CD4-positive, alpha-beta T cell (primary cell): ENCODE measurements at regions of chr15 and their contacts with region 1.

Region 1: GRCh38 chr15:101294731-101295606 is at the start of gene SNRPA1:
- DNase-seq: peak; percentile 94 to 99 (median 97)
- ATAC-seq: peak; percentile 80
- H3K4me3 ChIP-seq: peak within 1 kb of the TSS; percentile 90
- H3K4me3 Mint-ChIP-seq: peak within 1 kb of the TSS; percentile 100
- H3K27ac ChIP-seq: peak within 1 kb of the TSS; percentile 95 to 98
- H3K27ac Mint-ChIP-seq: peak within 1 kb of the TSS; percentile 98
- H3K4me1 ChIP-seq: peaks cover 35% of the 10 kb centered on the region
- H3K4me1 Mint-ChIP-seq: peaks cover 60% of the 10 kb centered on the region
- H3K27me3 ChIP-seq: no peaks in the 10 kb centered on the region
- H3K27me3 Mint-ChIP-seq: no peaks in the 10 kb centered on the region
- CTCF ChIP-seq: no peak
- total RNA-seq, gene SNRPA1: 214 to 222 TPM

Region 2: DNA sequence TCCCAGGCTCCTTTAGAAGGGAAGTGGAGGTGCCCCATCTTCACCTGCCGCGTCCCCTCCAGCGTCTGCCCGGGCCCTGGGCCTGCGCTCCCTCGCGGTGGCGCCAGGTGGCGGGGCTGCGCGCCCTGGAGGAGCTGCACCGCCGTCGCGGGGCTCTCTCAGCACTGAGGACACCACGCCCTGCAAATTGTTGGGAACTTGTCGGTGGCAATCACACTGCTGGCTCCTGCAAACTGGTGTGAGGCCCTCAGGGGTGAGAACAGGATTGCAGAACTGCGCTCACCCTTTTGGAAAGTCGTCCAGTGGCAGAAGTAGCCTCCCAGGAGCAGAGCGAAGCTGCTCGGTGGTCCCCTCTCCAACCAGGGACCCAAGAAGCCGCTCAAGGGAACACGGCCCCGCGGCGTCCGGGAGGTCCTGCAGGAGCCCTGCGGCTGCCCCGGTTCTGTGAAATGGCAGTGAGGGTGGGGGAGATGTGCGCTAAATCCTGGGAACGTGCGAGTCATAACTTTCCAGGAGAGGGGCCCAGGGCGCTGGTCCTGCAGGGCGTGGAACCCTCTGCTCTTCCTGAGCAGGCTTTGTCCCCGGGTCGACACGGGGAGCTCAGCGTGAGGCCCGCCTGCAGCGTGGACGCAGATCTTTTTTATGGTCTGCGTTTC is 376.8 kb before region 1 on chr15:
- CTCF ChIA-PET with region 1: no interaction called
- POLR2A ChIA-PET with region 1: no interaction called
- intact Hi-C with region 1: no loop called
- DNase-seq: peak; percentile 17 to 75 (median 54)
- ATAC-seq: peak; percentile 86
- H3K4me3 ChIP-seq: peak overlapping the region; percentile 53
- H3K4me3 Mint-ChIP-seq: peak overlapping the region; percentile 86
- H3K27ac ChIP-seq: no peak overlapping the region
- H3K27ac Mint-ChIP-seq: no peak overlapping the region
- H3K4me1 ChIP-seq: peaks cover 18% of the 10 kb centered on the region
- H3K4me1 Mint-ChIP-seq: peaks cover 5% of the 10 kb centered on the region
- H3K27me3 ChIP-seq: peaks cover 37 to 48% of the 10 kb centered on the region in 2 experiments
- H3K27me3 Mint-ChIP-seq: peaks cover 81% of the 10 kb centered on the region
- CTCF ChIP-seq: peak; percentile 65

Region 3: GRCh38 chr15:101000271-101000681 is 294.7 kb before region 1 on chr15:
- CTCF ChIA-PET with region 1: no interaction called
- POLR2A ChIA-PET with region 1: no interaction called
- intact Hi-C with region 1: no loop called
- DNase-seq: no peak
- ATAC-seq: no peak
- H3K4me3 ChIP-seq: no peak overlapping the region
- H3K4me3 Mint-ChIP-seq: no peak overlapping the region
- H3K27ac ChIP-seq: no peak overlapping the region
- H3K27ac Mint-ChIP-seq: no peak overlapping the region
- H3K4me1 ChIP-seq: no peaks in the 10 kb centered on the region
- H3K4me1 Mint-ChIP-seq: no peaks in the 10 kb centered on the region
- H3K27me3 ChIP-seq: peaks cover 4 to 9% of the 10 kb centered on the region in 2 experiments
- H3K27me3 Mint-ChIP-seq: peaks cover 24% of the 10 kb centered on the region
- CTCF ChIP-seq: no peak

Region 4: GRCh38 chr15:101277038-101277882 is 17.7 kb before region 1 on chr15 and contains the start of gene SELENOS:
- CTCF ChIA-PET with region 1: no interaction called
- POLR2A ChIA-PET with region 1: interaction called, 10 read pairs
- intact Hi-C with region 1: loop called (anchors 1 to 2 kb)
- DNase-seq: peak; percentile 68 to 95 (median 84)
- ATAC-seq: peak; percentile 96
- H3K4me3 ChIP-seq: peak within 1 kb of the TSS; percentile 92
- H3K4me3 Mint-ChIP-seq: peak within 1 kb of the TSS; percentile 97
- H3K27ac ChIP-seq: peak within 1 kb of the TSS; percentile 56 to 58
- H3K27ac Mint-ChIP-seq: peak within 1 kb of the TSS; percentile 95
- H3K4me1 ChIP-seq: peaks cover 23% of the 10 kb centered on the region
- H3K4me1 Mint-ChIP-seq: peaks cover 24% of the 10 kb centered on the region
- H3K27me3 ChIP-seq: no peaks in the 10 kb centered on the region
- H3K27me3 Mint-ChIP-seq: no peaks in the 10 kb centered on the region
- CTCF ChIP-seq: no peak
- total RNA-seq, gene SELENOS: 41.7 to 48.5 TPM

Region 5: GRCh38 chr15:101333401-101333800 is 38.4 kb after region 1 on chr15:
- CTCF ChIA-PET with region 1: no interaction called
- POLR2A ChIA-PET with region 1: interaction called, 8 read pairs
- intact Hi-C with region 1: loop called in 1 of 2 experiments (anchors 5 kb)
- DNase-seq: peak in 1 of 14 experiments; percentile 11
- ATAC-seq: no peak
- H3K4me3 ChIP-seq: no peak overlapping the region
- H3K4me3 Mint-ChIP-seq: no peak overlapping the region
- H3K27ac ChIP-seq: peak overlapping the region; percentile 76 to 84
- H3K27ac Mint-ChIP-seq: peak overlapping the region; percentile 90
- H3K4me1 ChIP-seq: peaks cover 25% of the 10 kb centered on the region
- H3K4me1 Mint-ChIP-seq: peaks cover 14% of the 10 kb centered on the region
- H3K27me3 ChIP-seq: peaks cover 4 to 8% of the 10 kb centered on the region in 2 experiments
- H3K27me3 Mint-ChIP-seq: peaks cover 21% of the 10 kb centered on the region
- CTCF ChIP-seq: no peak

Region 6: GRCh38 chr15:101625980-101626379 is 331.0 kb after region 1 on chr15:
- CTCF ChIA-PET with region 1: no interaction called
- POLR2A ChIA-PET with region 1: no interaction called
- intact Hi-C with region 1: no loop called
- DNase-seq: no peak
- ATAC-seq: no peak
- H3K4me3 ChIP-seq: no peak overlapping the region
- H3K4me3 Mint-ChIP-seq: no peak overlapping the region
- H3K27ac ChIP-seq: no peak overlapping the region
- H3K27ac Mint-ChIP-seq: no peak overlapping the region
- H3K4me1 ChIP-seq: peaks cover 6% of the 10 kb centered on the region
- H3K4me1 Mint-ChIP-seq: peaks cover 34% of the 10 kb centered on the region
- H3K27me3 ChIP-seq: no peaks in the 10 kb centered on the region
- H3K27me3 Mint-ChIP-seq: no peaks in the 10 kb centered on the region
- CTCF ChIP-seq: no peak

Region 7: GRCh38 chr15:101641166-101641764 is 346.3 kb after region 1 on chr15:
- CTCF ChIA-PET with region 1: interaction called, 18 read pairs
- POLR2A ChIA-PET with region 1: interaction called, 28 read pairs
- intact Hi-C with region 1: loop called (anchors 1 to 2 kb)
- DNase-seq: peak; percentile 62 to 90 (median 72)
- ATAC-seq: peak; percentile 66
- H3K4me3 ChIP-seq: no peak overlapping the region
- H3K4me3 Mint-ChIP-seq: no peak overlapping the region
- H3K27ac ChIP-seq: peak overlapping the region; percentile 43 to 74
- H3K27ac Mint-ChIP-seq: peak overlapping the region; percentile 71
- H3K4me1 ChIP-seq: peaks cover 18% of the 10 kb centered on the region
- H3K4me1 Mint-ChIP-seq: peaks cover 42% of the 10 kb centered on the region
- H3K27me3 ChIP-seq: no peaks in the 10 kb centered on the region
- H3K27me3 Mint-ChIP-seq: no peaks in the 10 kb centered on the region
- CTCF ChIP-seq: peak; percentile 98

Region 8: DNA sequence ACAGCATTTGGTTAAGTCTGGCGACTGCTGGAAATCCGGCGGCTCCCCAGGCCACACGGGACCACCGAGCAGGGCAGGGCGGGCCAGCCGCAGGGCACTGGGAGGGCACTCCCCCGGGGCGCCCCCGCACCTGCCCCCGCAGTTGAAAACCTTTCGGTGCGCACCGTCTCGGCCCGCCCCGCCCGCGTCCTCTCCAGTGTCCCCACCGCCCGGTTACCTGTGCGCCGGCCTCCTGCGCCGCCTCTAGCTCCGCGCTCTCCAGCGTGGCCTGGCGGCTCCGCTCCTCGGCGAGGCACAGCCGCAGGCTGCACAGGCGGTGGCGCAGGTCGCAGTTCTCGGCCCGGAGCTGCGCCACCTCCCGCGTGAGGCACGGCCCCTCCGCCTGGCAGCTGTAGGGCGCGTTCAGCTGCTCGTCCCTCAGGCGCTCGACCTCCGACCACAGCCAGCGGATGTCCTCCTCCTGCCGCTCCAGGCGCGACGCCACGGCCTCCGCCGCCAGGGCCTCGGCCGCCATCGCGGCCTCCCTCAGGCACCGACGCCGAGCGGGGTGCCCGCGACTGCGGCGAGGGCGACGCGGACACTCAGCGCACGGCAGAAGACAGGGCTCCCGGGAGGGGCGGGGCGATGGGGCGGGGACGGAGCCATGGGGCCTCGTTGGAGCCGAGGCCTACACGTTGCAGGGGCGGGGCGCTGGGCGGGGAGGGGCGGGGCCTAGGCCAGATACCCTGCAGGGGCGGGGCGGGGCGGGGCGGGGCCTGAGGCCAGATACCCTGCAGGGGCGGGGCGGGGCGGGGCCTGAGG is 429.1 kb after region 1 on chr15 and contains the start of gene TARS3:
- CTCF ChIA-PET with region 1: interaction called, 3 read pairs
- POLR2A ChIA-PET with region 1: interaction called, 29 read pairs
- intact Hi-C with region 1: loop called (anchors 1 to 2 kb)
- DNase-seq: peak; percentile 93 to 100 (median 97)
- ATAC-seq: peak; percentile 92
- H3K4me3 ChIP-seq: peak within 1 kb of the TSS; percentile 64
- H3K4me3 Mint-ChIP-seq: peak within 1 kb of the TSS; percentile 89
- H3K27ac ChIP-seq: peak within 1 kb of the TSS; percentile 61 to 81
- H3K27ac Mint-ChIP-seq: peak within 1 kb of the TSS; percentile 87
- H3K4me1 ChIP-seq: peaks cover 20% of the 10 kb centered on the region
- H3K4me1 Mint-ChIP-seq: peaks cover 42% of the 10 kb centered on the region
- H3K27me3 ChIP-seq: no peaks in the 10 kb centered on the region
- H3K27me3 Mint-ChIP-seq: no peaks in the 10 kb centered on the region
- CTCF ChIP-seq: peak; percentile 38
- total RNA-seq, gene TARS3: 16.6 to 18.1 TPM